A673 (cell line): ENCODE measurements at regions of chr1 and their contacts with region 1.

Region 1: DNA sequence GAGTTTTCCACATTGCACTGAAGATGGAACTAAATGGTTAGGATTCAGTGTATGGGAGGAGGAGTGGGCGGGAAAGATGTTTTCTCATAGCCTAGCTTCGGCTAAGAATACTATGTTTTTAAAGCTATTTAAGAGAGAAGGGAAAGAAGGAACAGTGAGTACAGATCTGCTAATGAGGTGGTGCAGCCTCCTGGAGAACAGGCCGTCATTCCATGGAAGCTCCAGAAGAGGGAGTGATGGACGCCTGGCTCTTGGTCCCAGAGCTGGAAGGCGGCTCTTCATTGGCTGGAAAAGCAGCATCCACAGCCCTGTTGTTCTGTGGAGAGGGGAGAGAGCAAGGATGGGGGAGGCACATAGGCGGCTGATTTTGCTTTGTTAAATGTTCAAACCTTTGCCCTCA is 6.9 kb downstream of the CAMK1G start:
- DNase-seq: no peak
- H3K4me3 ChIP-seq: no peak overlapping the region
- H3K27ac ChIP-seq: no peak overlapping the region
- H3K4me1 ChIP-seq: peaks cover 26% of the 10 kb centered on the region
- H3K27me3 ChIP-seq: no peaks in the 10 kb centered on the region
- CTCF ChIP-seq: no peak

Region 2: DNA sequence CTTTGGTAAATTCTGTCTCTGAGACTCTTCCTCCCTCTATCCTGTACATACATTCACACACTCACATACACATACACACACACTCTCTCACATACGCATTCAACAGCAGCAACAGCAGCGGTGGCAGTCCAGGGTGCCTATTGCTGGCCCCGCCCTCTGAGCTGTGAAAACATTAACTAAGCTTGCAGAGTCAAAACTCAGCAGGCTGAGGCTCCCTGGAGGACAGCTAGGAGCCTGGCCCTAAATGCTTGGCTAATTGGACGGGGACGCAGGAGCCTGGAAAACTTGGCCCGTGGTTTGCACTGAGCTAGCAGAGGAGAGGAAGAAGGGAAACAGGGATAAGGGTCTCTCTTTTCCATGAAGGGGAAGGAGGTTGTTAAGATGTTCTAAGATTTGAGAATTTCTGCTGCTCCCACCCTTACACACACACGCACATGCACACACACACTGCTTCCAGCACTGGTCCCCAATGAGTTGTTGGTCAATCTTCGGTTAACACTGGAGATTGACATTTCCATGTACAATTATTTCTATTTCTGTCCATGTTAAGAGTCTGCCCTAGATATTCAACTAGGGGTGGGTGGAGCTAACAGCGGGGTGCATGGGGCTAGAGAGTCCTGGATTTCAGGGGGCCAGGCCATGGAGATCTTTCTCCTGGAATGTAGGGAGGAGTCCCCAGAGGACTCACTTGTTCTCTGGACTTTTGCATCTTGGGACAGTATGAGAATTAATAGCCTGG is 1440.5 kb before region 1 on chr1:
- CTCF ChIA-PET with region 1: no interaction called
- POLR2A ChIA-PET with region 1: no interaction called
- intact Hi-C with region 1: loop called (anchors 5 kb)
- DNase-seq: peak; percentile 24
- H3K4me3 ChIP-seq: no peak overlapping the region
- H3K27ac ChIP-seq: no peak overlapping the region
- H3K4me1 ChIP-seq: no peaks in the 10 kb centered on the region
- H3K27me3 ChIP-seq: no peaks in the 10 kb centered on the region
- CTCF ChIP-seq: no peak

Region 3: DNA sequence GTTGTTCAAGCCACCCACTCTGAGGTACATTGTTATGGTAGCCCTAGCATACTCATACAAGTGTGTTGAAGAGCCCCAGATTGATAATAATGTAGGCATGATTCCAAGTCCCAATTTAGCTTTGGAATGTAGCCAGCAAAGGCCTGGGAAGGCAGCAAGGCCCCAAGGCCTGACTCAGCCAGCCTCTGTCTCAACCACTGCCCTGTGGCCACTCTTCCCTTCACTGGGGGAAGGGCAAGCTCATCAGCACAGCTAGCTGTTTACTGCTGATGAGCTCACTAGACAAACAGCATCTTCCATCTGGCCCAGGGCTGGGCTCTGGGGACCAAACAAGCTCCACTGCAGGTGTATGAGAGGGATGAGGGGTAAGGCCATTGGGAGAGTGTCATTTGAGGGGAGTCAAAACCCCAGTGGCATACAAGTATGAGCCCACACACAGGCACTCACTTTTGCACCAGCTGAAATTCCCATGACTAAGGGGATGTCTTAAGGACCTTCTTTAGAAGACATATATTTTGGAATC is 217.7 kb after region 1 on chr1:
- CTCF ChIA-PET with region 1: no interaction called
- POLR2A ChIA-PET with region 1: no interaction called
- intact Hi-C with region 1: no loop called
- DNase-seq: peak; percentile 21
- H3K4me3 ChIP-seq: no peak overlapping the region
- H3K27ac ChIP-seq: no peak overlapping the region
- H3K4me1 ChIP-seq: peaks cover 7% of the 10 kb centered on the region
- H3K27me3 ChIP-seq: no peaks in the 10 kb centered on the region
- CTCF ChIP-seq: no peak